Prostate gland (tissue), 2 donors: ENCODE measurements at regions of chr12 and their contacts with region 1.

Region 1: GRCh38 chr12:3275171-3276041 is 198.2 kb downstream of the TSPAN9 start:
- DNase-seq: peak; percentile 71
- H3K4me3 ChIP-seq: no peak overlapping the region
- H3K27ac ChIP-seq: no peak overlapping the region
- H3K4me1 ChIP-seq: peaks cover 10% of the 10 kb centered on the region
- H3K27me3 ChIP-seq: no peaks in the 10 kb centered on the region
- CTCF ChIP-seq: peak; percentile 95 to 99 (median 96)
- POLR2A ChIP-seq: no peak

Region 2: DNA sequence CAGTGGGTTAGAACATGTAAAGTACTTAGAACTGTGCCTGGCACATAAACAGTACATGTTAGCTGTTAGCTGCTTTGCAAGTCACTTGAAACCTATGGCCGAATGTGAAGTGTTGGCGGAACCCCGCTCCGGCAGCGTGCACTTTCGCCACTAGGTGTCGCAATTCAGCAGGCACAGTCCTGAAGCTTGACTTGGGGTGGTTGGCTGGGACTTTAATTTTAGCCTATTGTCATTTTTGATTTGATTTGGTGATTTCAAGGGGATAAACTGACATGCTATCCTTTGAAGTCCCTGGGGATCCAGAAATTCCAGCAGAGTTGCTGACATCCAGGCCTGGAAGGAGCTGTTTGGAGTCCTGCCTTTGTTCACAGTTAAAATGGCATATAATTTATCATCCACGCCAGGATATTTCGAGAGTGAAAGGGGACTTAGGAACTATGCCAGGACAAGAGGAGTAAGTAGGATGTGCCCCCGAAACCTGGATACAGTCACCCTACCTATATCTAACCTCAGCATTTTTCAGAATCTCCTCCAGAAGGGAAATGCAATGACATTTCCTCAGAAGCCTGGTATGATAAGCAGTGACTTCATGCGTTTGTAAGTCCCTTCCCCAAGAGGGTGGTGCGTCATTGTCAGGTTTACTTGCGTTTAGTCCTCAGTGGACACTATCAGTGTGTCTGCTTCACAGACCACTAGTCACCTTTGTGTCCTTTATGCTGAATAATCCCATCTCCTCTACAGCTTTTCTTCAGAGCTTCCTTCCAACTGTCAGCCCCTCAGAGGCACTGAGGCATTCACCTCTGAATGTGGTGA is 201.8 kb before region 1 on chr12:
- intact Hi-C with region 1: loop called (anchors 2 kb)
- DNase-seq: peak; percentile 84
- H3K4me3 ChIP-seq: no peak overlapping the region
- H3K27ac ChIP-seq: no peak overlapping the region
- H3K4me1 ChIP-seq: peaks cover 4% of the 10 kb centered on the region
- H3K27me3 ChIP-seq: no peaks in the 10 kb centered on the region
- CTCF ChIP-seq: peak; percentile 94 to 98 (median 96)
- POLR2A ChIP-seq: no peak

Region 3: DNA sequence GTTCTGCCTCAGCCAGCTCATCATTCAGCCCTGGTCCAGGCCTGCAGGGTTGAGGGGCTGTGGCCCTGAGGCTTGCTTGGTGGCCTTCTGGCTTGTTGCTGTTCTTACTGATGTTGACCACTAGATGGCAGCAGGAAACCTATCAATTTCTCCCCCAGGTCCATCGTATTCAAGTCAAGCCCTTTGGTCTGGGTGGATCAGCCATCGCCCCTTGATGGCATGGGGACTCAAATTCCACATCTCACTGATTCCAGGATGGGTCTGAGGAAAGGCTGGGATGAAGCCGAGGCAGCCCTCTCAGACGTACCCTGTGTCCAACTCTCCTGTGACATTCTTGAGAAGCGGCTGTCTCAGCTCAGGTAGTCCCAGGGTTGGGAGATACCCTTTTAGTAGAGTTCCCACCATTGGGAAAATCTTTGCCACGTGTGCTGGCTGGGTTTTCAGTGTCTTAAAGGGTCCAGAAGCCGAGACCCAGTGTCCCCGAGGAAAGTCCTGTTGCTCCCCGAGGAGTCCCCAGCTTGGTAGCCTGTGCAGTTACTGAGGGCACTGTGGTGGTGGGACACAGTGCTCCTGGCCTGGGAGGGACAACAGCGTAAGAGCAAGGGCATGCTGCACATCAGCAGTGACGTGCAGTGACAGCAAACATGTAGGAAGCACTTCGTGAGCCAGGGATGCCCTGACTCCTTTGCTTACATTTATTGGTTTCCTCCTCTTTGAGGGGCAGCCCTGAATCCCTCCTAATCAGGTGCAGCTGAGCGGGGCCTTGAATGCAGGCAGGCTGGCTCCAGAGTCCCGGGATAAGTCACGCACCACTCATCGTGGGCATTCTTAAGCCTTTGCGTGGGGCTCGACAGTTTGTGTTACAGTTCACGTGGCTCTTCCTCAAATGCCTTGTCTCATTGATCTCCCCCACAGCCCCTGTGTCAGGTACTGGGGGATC is 139.6 kb before region 1 on chr12:
- intact Hi-C with region 1: loop called (anchors 1 kb)
- DNase-seq: peak; percentile 33
- H3K4me3 ChIP-seq: no peak overlapping the region
- H3K27ac ChIP-seq: no peak overlapping the region
- H3K4me1 ChIP-seq: peaks cover 3% of the 10 kb centered on the region
- H3K27me3 ChIP-seq: no peaks in the 10 kb centered on the region
- CTCF ChIP-seq: peak; percentile 67 to 88 (median 81)
- POLR2A ChIP-seq: no peak

Region 4: GRCh38 chr12:3202734-3203446 is 72.5 kb before region 1 on chr12:
- intact Hi-C with region 1: loop called (anchors 10 kb)
- DNase-seq: peak; percentile 30
- H3K4me3 ChIP-seq: no peak overlapping the region
- H3K27ac ChIP-seq: no peak overlapping the region
- H3K4me1 ChIP-seq: peaks cover 14% of the 10 kb centered on the region
- H3K27me3 ChIP-seq: no peaks in the 10 kb centered on the region
- CTCF ChIP-seq: peak; percentile 82 to 85 (median 84)
- POLR2A ChIP-seq: no peak

Region 5: GRCh38 chr12:3964439-3964838 is 689.0 kb after region 1 on chr12:
- intact Hi-C with region 1: no loop called
- DNase-seq: no peak
- H3K4me3 ChIP-seq: no peak overlapping the region
- H3K27ac ChIP-seq: no peak overlapping the region
- H3K4me1 ChIP-seq: no peaks in the 10 kb centered on the region
- H3K27me3 ChIP-seq: no peaks in the 10 kb centered on the region
- CTCF ChIP-seq: no peak
- POLR2A ChIP-seq: no peak